CD14-positive monocyte (primary cell): ENCODE measurements at regions of chr7 and their contacts with region 1.

Region 1: DNA sequence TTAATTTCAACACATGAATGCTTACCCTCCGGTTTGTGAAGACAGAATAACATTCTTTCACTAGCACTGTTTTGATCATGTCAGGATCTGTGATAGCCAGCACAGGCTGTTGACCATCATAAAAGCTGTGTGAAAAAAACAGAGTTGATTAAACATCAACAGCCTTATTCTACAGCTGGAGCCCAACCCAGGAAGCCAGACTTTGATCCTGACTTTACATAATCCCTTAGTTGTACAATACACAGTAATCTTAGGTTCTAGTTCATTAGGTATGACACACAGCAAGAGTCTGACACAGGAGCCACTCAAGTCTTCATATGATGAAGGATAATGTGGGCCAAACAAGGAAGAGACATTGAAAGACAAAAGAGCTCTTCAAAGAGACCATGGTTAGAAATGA is 11.4 kb downstream of the CYP3A4 start:
- DNase-seq: no peak
- H3K4me3 ChIP-seq: no peak overlapping the region
- H3K4me3 Mint-ChIP-seq: no peak overlapping the region
- H3K27ac ChIP-seq: no peak overlapping the region
- H3K27ac Mint-ChIP-seq: no peak overlapping the region
- H3K4me1 ChIP-seq: no peaks in the 10 kb centered on the region
- H3K4me1 Mint-ChIP-seq: peaks cover 1% of the 10 kb centered on the region
- H3K27me3 ChIP-seq: peaks cover 0 to 9% of the 10 kb centered on the region in 2 donors
- H3K27me3 Mint-ChIP-seq: peaks cover 8 to 33% (median 17%) of the 10 kb centered on the region in 3 donors
- CTCF ChIP-seq: no peak

Region 2: GRCh38 chr7:99597762-99598501 is 174.6 kb before region 1 on chr7 and contains the start of gene TMEM225B:
- intact Hi-C with region 1: no loop called
- DNase-seq: no peak
- H3K4me3 ChIP-seq: no peak within 1 kb of the TSS
- H3K4me3 Mint-ChIP-seq: no peak within 1 kb of the TSS
- H3K27ac ChIP-seq: no peak within 1 kb of the TSS
- H3K27ac Mint-ChIP-seq: no peak within 1 kb of the TSS
- H3K4me1 ChIP-seq: no peaks in the 10 kb centered on the region
- H3K4me1 Mint-ChIP-seq: peaks cover 1% of the 10 kb centered on the region
- H3K27me3 ChIP-seq: no peaks in the 10 kb centered on the region
- H3K27me3 Mint-ChIP-seq: peaks cover 2% of the 10 kb centered on the region in 3 donors
- CTCF ChIP-seq: no peak
- polyA plus RNA-seq, gene TMEM225B: 0.20 to 0.23 TPM in 2 of 3 donors, not detected in the other

Region 3: GRCh38 chr7:99693427-99694200 is 79.0 kb before region 1 on chr7:
- intact Hi-C with region 1: loop called in 1 of 2 experiments (anchors 5 kb)
- DNase-seq: no peak
- H3K4me3 ChIP-seq: no peak overlapping the region
- H3K4me3 Mint-ChIP-seq: no peak overlapping the region
- H3K27ac ChIP-seq: no peak overlapping the region
- H3K27ac Mint-ChIP-seq: no peak overlapping the region
- H3K4me1 ChIP-seq: no peaks in the 10 kb centered on the region
- H3K4me1 Mint-ChIP-seq: no peaks in the 10 kb centered on the region
- H3K27me3 ChIP-seq: no peaks in the 10 kb centered on the region
- H3K27me3 Mint-ChIP-seq: peaks cover 0 to 5% (median 0%) of the 10 kb centered on the region in 3 donors
- CTCF ChIP-seq: no peak